Posterior cingulate gyrus (tissue), 11 donors: ENCODE measurements at regions of chr1 and their contacts with region 1.

Region 1: DNA sequence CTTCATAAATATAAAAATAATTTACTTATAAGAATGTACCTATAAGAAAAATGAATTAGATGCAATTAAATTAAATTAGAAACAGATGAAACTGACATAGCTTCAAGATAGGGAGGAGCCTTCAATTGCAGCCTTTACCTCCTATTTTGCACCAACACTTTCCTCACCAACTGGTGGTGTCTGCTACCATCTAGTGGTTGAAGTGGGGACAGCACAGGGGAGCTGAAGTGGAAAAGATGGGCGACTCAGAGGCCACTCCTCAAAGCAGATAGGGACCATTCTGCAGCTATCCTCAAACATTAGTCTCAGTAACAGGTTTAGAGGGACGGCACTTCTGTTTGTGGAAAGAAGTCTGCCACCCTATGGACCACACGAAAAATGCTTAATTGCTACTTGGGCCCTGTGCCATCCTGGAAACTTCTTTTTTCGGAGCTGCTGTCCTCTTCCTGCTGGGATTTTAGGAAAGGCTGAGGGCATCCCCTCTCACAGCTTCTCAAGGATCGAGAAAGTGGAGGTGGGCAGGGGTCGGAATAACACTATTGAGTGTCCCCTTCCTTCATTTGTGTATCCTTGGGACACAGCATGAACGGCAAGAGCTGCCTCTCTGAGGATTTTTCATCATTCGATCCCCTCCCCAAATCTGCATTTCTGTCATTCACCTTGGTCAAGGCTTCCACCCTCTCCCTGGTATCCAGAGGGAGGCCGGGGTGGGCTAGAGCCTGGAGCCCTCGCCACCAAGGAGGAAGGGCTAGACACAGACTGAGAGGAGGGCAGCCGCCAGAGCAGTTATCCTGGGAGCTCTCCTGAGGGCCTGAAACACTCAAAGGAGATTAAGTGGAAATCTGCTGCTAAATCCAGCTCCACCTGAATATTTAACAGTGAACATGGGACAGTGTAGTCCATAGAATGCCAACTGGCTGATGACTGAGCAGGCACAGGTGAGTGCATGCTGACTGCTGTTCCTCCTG is 9.6 kb downstream of the PROK1 start:
- DNase-seq: peak in 8 of 10 donors; percentile 54 to 94 (median 85)

Region 2: GRCh38 chr1:110209715-110210603 is 250.6 kb before region 1 on chr1 and contains the start of gene KCNC4:
- intact Hi-C with region 1: no loop called
- DNase-seq: peak; percentile 48 to 96 (median 77)

Region 3: GRCh38 chr1:110328274-110328673 is 132.3 kb before region 1 on chr1:
- intact Hi-C with region 1: no loop called
- DNase-seq: no peak

Region 4: GRCh38 chr1:110412576-110412975 is 48.0 kb before region 1 on chr1:
- intact Hi-C with region 1: loop called (anchors 1 kb)
- DNase-seq: peak; percentile 28 to 93 (median 65)

Region 5: GRCh38 chr1:110508038-110508940 is 47.8 kb after region 1 on chr1:
- intact Hi-C with region 1: no loop called
- DNase-seq: peak in 2 of 10 donors; percentile 53 to 79